Psoas muscle (tissue), 8 donors: ENCODE measurements at regions of chr11 and their contacts with region 1.

Region 1: GRCh38 chr11:69985641-69986439 is 92.3 kb upstream of the ANO1 start:
- DNase-seq: peak in 1 of 2 donors; percentile 43
- ATAC-seq: peak in 1 of 4 donors; percentile 40
- H3K4me3 ChIP-seq: peak overlapping the region; percentile 47
- H3K27ac ChIP-seq: no peak overlapping the region
- H3K4me1 ChIP-seq: no peaks in the 10 kb centered on the region
- H3K27me3 ChIP-seq: peaks cover 0 to 48% (median 17%) of the 10 kb centered on the region in 3 donors
- CTCF ChIP-seq: no peak

Region 2: GRCh38 chr11:69867738-69868493 is 117.9 kb before region 1 on chr11:
- intact Hi-C with region 1: no loop called
- DNase-seq: peak; percentile 40 to 66
- ATAC-seq: peak in 3 of 4 donors; percentile 62 to 66 (median 63)
- H3K4me3 ChIP-seq: no peak overlapping the region
- H3K27ac ChIP-seq: no peak overlapping the region
- H3K4me1 ChIP-seq: no peaks in the 10 kb centered on the region
- H3K27me3 ChIP-seq: peaks cover 0 to 42% (median 9%) of the 10 kb centered on the region in 3 donors
- CTCF ChIP-seq: no peak

Region 3: GRCh38 chr11:70078095-70078795 is 92.4 kb after region 1 on chr11 and contains the start of gene ANO1:
- intact Hi-C with region 1: loop called in 1 of 2 experiments (anchors 5 kb)
- DNase-seq: no peak
- ATAC-seq: peak in 3 of 4 donors; percentile 19 to 61 (median 31)
- H3K4me3 ChIP-seq: peak within 1 kb of the TSS; percentile 58
- H3K27ac ChIP-seq: peak within 1 kb of the TSS; percentile 50
- H3K4me1 ChIP-seq: no peaks in the 10 kb centered on the region
- H3K27me3 ChIP-seq: peaks cover 0 to 47% (median 3%) of the 10 kb centered on the region in 3 donors
- CTCF ChIP-seq: no peak
- total RNA-seq, gene ANO1: 5.1 to 11.3 (median 11.3) TPM